HCT116 (cell line): ENCODE measurements at regions of chr6 and their contacts with region 1.

Region 1: GRCh38 chr6:41027799-41028628 is 11.0 kb downstream of the UNC5CL start:
- DNase-seq: peak; percentile 35
- ATAC-seq: peak; percentile 95
- H3K4me3 ChIP-seq: peak overlapping the region; percentile 48 to 58
- H3K27ac ChIP-seq: no peak overlapping the region; the same call in 1 of the 2 replicates
- H3K4me1 ChIP-seq: peaks cover 5 to 17% of the 10 kb centered on the region in 2 experiments
- H3K27me3 ChIP-seq: no peaks in the 10 kb centered on the region
- CTCF ChIP-seq: peak; percentile 95 to 97 (median 96)
- POLR2A ChIP-seq: peak; percentile 34
- RAD21 ChIP-seq: peak; percentile 98

Region 2: GRCh38 chr6:40328405-40328987 is 699.5 kb before region 1 on chr6:
- CTCF ChIA-PET with region 1: interaction called, 15 read pairs
- POLR2A ChIA-PET with region 1: no interaction called
- RAD21 ChIA-PET with region 1: no interaction called
- intact Hi-C with region 1: loop called (anchors 2 kb)
- DNase-seq: peak; percentile 33
- ATAC-seq: peak; percentile 97
- H3K4me3 ChIP-seq: no peak overlapping the region
- H3K27ac ChIP-seq: no peak overlapping the region
- H3K4me1 ChIP-seq: no peaks in the 10 kb centered on the region; a peak in 1 of 4 replicates
- H3K27me3 ChIP-seq: peaks cover 69% of the 10 kb centered on the region
- CTCF ChIP-seq: peak; percentile 94 to 98 (median 96)
- POLR2A ChIP-seq: no peak
- RAD21 ChIP-seq: peak; percentile 88

Region 3: GRCh38 chr6:40819182-40819834 is 208.7 kb before region 1 on chr6:
- CTCF ChIA-PET with region 1: no interaction called
- POLR2A ChIA-PET with region 1: no interaction called
- RAD21 ChIA-PET with region 1: no interaction called
- intact Hi-C with region 1: loop called (anchors 10 kb)
- DNase-seq: no peak
- ATAC-seq: no peak
- H3K4me3 ChIP-seq: no peak overlapping the region
- H3K27ac ChIP-seq: no peak overlapping the region
- H3K4me1 ChIP-seq: no peaks in the 10 kb centered on the region
- H3K27me3 ChIP-seq: no peaks in the 10 kb centered on the region
- CTCF ChIP-seq: no peak
- POLR2A ChIP-seq: no peak
- RAD21 ChIP-seq: no peak

Region 4: DNA sequence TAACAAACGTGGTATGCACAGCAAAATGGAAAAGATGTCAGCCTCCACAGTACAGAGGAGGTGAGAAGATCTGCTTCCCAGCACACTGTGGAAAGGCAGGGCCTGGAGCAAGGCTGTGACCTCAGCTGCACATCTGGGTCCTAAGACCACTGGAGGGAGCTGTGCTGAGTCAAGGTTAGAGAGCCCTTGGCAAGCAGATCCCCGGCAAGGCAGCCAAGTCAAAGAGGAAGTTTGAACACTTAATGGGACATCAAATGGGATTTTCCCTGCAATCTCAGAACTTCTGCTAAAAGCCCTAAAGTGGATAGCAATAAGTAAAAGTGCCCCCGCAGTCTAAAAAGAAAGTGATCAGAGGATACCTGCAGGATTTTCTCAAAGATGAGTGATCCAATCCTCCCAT is 28.4 kb before region 1 on chr6:
- CTCF ChIA-PET with region 1: interaction called, 12 read pairs
- POLR2A ChIA-PET with region 1: interaction called, 3 read pairs
- RAD21 ChIA-PET with region 1: no interaction called
- intact Hi-C with region 1: no loop called
- DNase-seq: peak; percentile 36
- ATAC-seq: peak; percentile 71
- H3K4me3 ChIP-seq: no peak overlapping the region
- H3K27ac ChIP-seq: no peak overlapping the region
- H3K4me1 ChIP-seq: peaks cover 30 to 47% of the 10 kb centered on the region in 2 experiments
- H3K27me3 ChIP-seq: no peaks in the 10 kb centered on the region
- CTCF ChIP-seq: peak in 2 of 3 experiments; percentile 51 to 54; a peak in 4 of 6 replicates
- POLR2A ChIP-seq: no peak
- RAD21 ChIP-seq: no peak

Region 5: GRCh38 chr6:41741625-41742489 is 713.8 kb after region 1 on chr6:
- CTCF ChIA-PET with region 1: no interaction called
- POLR2A ChIA-PET with region 1: no interaction called
- RAD21 ChIA-PET with region 1: no interaction called
- intact Hi-C with region 1: no loop called
- DNase-seq: no peak
- ATAC-seq: peak; percentile 35
- H3K4me3 ChIP-seq: no peak overlapping the region
- H3K27ac ChIP-seq: no peak overlapping the region
- H3K4me1 ChIP-seq: peaks cover 6 to 19% of the 10 kb centered on the region in 2 experiments; a peak in 3 of 4 replicates
- H3K27me3 ChIP-seq: no peaks in the 10 kb centered on the region
- CTCF ChIP-seq: no peak
- POLR2A ChIP-seq: no peak
- RAD21 ChIP-seq: no peak